Left cardiac atrium (tissue), 4 donors: ENCODE measurements at regions of chr6 and their contacts with region 1.

Region 1: GRCh38 chr6:36360241-36361054 is 23.8 kb upstream of the BNIP5 start:
- DNase-seq: peak; percentile 84
- ATAC-seq: peak; percentile 88 to 91

Region 2: DNA sequence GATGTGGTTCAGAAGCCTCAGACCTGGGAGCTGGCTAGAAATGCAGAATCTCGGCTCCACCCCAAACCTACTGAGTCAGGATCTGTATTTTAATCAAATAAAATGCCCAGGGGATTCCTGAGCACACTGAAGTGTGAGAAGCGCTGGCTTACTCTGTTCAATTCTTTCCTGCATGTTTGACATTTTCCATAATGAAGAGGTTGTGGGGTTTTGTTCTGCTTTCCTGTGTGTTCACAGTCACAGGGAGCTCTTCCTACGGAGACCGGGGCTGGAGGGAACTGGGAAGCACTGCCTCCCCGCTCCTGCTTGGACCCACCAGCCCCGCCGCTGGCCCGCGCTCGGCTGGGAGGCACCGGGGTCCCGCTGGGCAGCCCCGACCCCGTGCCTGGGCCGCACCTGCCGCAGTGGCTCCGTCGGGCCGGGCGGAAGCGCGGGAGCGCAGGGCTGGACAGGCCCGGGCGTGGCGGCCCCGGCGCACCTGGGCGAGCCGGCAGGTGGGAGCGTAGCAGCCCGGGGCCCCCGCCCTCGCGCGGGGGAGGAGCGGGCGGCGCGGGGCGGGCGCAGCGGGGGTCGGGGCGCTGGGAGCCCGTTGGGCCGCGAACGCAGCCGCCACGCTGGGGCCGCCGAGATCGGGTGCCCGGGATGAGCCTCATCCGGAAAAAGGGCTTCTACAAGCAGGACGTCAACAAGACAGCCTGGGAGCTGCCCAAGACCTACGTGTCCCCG is 230.3 kb before region 1 on chr6 and contains the start of gene MAPK13:
- intact Hi-C with region 1: loop called in 1 of 2 experiments (anchors 5 kb)
- DNase-seq: no peak
- ATAC-seq: peak; percentile 8 to 35
- total RNA-seq, gene MAPK13: 1.9 to 4.6 TPM

Region 3: GRCh38 chr6:36241728-36242127 is 118.7 kb before region 1 on chr6:
- intact Hi-C with region 1: no loop called
- DNase-seq: no peak
- ATAC-seq: no peak

Region 4: DNA sequence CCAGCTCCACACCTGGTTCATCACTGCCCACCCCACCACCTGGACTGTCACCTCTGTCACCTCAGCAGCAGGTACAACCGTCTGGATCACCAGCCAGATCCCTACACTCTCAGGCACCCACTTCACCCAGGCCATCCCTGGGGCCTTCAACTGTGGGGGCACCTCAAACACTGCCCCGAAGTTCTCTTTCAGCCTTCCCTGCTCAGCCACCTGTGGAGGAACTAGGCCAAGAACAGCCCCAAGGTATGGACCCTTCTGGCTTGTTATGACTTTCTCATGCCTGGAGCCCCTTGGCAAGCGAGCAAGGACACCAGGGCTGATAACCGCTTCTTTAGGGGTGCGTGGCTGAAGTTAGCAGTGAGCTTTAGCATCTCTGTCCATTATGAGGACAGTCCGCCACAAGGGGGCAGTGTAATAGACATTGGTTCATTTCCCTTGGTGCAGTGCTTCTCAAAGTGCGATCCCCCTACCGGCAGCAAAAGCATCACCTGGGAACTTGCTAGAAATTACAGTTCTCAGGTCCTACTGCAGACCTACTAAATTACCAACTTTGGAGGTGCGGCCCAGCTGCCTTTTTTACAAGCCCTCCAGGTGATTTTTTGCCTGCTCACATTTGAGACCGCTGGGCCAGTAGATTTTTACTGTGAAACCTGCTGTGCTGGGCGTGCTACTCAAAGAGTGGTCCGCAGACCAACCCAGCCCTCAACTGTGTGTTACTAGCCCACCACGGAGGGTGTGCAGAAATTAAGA is 58.0 kb before region 1 on chr6:
- intact Hi-C with region 1: loop called (anchors 1 to 5 kb)
- DNase-seq: peak; percentile 89
- ATAC-seq: peak; percentile 90